ENCODE measurements at regions of chr17 and their contacts with region 1.

Region 1: DNA sequence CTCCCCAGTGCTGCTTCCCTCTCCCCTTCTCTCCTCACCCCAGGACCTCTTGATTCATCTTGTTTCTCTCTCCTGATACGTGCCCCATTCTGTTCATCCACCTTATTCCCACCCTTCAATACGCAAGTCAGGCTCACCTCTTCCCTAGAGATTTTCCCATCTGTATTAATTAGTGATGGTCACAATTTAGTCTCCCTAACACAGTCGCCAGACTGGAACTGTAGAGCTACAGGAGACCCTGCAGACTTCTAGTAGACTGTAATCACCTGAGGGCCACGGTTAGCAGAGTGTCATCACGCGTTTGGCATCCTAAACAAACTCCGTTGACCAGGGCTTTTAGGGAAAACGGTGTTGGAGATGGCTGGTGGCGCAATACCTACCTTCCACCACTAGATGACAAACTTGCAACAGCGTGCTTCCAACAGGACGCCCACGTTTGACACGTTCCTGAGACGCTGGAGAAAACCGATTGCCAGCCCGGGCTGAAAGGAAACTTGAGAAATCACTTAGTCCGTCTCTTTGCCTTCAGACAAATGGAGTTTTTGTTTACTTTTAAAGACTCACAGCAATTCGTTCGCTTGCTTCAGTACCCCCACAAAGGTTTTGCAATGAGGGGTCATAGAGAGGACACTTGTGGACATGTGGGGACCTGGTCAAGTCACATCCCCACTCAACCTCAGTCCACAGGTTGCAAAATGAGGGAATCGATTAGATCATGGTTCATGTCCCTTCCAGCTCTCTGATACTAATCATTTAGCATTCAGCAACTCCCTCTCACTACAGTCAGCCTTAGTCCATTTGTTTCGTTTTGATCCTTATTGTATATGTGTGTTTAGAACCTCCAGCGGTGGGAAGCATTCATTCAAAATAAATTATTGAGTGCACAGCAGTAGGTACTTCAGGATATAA is 20.6 kb downstream of the MYL4 start:
- DNase-seq: peak; percentile 90
- H3K4me3 Mint-ChIP-seq: peak overlapping the region; percentile 34
- H3K27ac Mint-ChIP-seq: no peak overlapping the region
- H3K4me1 Mint-ChIP-seq: peaks cover 9% of the 10 kb centered on the region
- H3K27me3 Mint-ChIP-seq: peaks cover 3% of the 10 kb centered on the region

Region 2: GRCh38 chr17:47315451-47316266 is 85.9 kb after region 1 on chr17:
- CTCF ChIA-PET with region 1: interaction called, 51 read pairs
- intact Hi-C with region 1: loop called (anchors 1 kb)
- DNase-seq: peak; percentile 56
- H3K4me3 Mint-ChIP-seq: no peak overlapping the region
- H3K27ac Mint-ChIP-seq: no peak overlapping the region
- H3K4me1 Mint-ChIP-seq: no peaks in the 10 kb centered on the region
- H3K27me3 Mint-ChIP-seq: no peaks in the 10 kb centered on the region